ENCODE measurements at regions of chr21 and their contacts with region 1.

Region 1: DNA sequence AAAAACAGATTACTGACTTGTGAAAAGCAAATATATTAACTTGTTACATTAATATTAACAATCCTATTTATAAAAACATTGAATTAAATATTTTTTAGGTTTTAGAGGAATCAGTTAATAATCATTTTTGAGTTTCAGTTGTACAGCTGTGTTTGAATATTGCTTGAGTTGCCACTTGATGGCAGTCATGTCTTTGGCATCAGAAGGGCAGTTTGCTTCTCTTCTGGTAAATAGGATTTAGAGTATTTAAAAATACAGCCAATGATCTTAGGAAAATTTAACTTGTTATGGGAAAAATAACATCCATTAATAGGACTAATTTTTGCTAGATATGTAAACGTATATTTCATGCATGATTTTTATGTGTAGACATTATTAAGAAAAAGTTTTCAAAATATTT is 234.1 kb downstream of the NCAM2 start:
- DNase-seq: peak in 2 of 4 donors; percentile 11 to 45
- ATAC-seq: peak; percentile 36
- H3K4me3 ChIP-seq: no peak overlapping the region
- H3K27ac ChIP-seq: no peak overlapping the region
- H3K4me1 ChIP-seq: no peaks in the 10 kb centered on the region
- H3K27me3 ChIP-seq: no peaks in the 10 kb centered on the region
- CTCF ChIP-seq: no peak

Region 2: DNA sequence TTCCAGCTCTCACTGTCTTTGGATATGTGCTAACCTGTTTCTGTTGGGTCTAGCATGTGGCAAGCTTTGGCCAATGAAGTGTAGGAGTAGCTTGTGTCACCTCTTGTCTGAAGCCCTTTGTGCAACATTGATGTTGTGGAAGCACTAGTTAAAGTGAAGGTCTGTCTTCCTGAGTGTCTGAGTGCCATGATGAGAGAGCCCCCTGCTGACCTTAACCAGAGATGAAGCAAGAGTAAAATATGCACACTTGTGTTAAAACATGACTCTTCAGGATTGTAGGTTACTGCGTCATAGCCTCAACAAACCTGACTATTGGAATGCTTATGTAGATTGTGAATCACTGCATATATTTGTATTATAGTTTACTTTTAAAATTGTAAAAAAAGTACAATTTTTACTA is 130.4 kb before region 1 on chr21:
- intact Hi-C with region 1: no loop called
- DNase-seq: peak in 1 of 4 donors; percentile 37
- ATAC-seq: peak; percentile 82
- H3K4me3 ChIP-seq: no peak overlapping the region
- H3K27ac ChIP-seq: no peak overlapping the region
- H3K4me1 ChIP-seq: no peaks in the 10 kb centered on the region
- H3K27me3 ChIP-seq: no peaks in the 10 kb centered on the region
- CTCF ChIP-seq: no peak

Region 3: DNA sequence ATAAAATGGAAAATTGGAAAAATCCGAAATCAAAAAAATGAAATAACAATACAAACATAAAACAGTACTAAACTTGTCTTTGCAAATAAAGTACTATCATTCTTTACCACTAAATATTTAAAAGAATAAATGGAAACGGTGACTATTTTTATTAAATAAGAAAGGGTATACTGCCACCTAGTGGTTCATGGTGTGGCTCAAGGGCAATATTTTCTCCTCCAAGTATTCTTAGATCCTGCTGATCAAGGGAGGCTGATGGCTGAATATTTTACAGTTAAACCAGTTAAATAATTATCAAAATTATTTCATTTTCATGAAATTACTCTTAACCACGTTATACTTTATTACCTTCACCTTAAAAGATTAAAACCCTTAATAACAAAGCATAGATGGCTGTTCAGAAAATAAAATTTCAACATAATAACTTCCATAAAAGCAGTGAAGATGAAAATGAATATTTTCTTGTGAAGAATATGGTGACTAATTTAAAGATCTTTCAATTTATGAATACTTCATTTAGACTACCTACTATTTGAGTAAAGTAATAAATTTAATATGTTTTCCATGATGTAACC is 1559.8 kb after region 1 on chr21:
- intact Hi-C with region 1: loop called in 1 of 2 experiments (anchors 10 kb)
- DNase-seq: peak in 2 of 4 donors; percentile 33 to 58
- ATAC-seq: peak; percentile 67
- H3K4me3 ChIP-seq: no peak overlapping the region
- H3K27ac ChIP-seq: no peak overlapping the region
- H3K4me1 ChIP-seq: no peaks in the 10 kb centered on the region
- H3K27me3 ChIP-seq: no peaks in the 10 kb centered on the region
- CTCF ChIP-seq: peak; percentile 69 to 78